IMR-90 (cell line): ENCODE measurements at regions of chr14 and their contacts with region 1.

Region 1: GRCh38 chr14:21233457-21234076 is 35.7 kb downstream of the HNRNPC start:
- DNase-seq: no peak
- ATAC-seq: no peak; the same call in 1 of the 2 replicates
- H3K4me3 ChIP-seq: no peak overlapping the region
- H3K27ac ChIP-seq: no peak overlapping the region
- H3K4me1 ChIP-seq: peaks cover 3% of the 10 kb centered on the region; the same call in 1 of the 2 replicates
- H3K27me3 ChIP-seq: no peaks in the 10 kb centered on the region
- CTCF ChIP-seq: no peak
- POLR2A ChIP-seq: no peak
- RAD21 ChIP-seq: no peak

Region 2: GRCh38 chr14:21145437-21145836 is 88.1 kb before region 1 on chr14:
- CTCF ChIA-PET with region 1: no interaction called
- POLR2A ChIA-PET with region 1: interaction called, 14 read pairs
- dilution Hi-C with region 1: no loop called
- in situ Hi-C with region 1: no loop called
- intact Hi-C with region 1: no loop called
- DNase-seq: no peak
- ATAC-seq: no peak
- H3K4me3 ChIP-seq: no peak overlapping the region
- H3K27ac ChIP-seq: no peak overlapping the region
- H3K4me1 ChIP-seq: no peaks in the 10 kb centered on the region
- H3K27me3 ChIP-seq: no peaks in the 10 kb centered on the region; the same call in 1 of the 2 replicates
- CTCF ChIP-seq: no peak
- POLR2A ChIP-seq: no peak
- RAD21 ChIP-seq: no peak